ENCODE measurements at regions of chr3 and their contacts with region 1.

Region 1: DNA sequence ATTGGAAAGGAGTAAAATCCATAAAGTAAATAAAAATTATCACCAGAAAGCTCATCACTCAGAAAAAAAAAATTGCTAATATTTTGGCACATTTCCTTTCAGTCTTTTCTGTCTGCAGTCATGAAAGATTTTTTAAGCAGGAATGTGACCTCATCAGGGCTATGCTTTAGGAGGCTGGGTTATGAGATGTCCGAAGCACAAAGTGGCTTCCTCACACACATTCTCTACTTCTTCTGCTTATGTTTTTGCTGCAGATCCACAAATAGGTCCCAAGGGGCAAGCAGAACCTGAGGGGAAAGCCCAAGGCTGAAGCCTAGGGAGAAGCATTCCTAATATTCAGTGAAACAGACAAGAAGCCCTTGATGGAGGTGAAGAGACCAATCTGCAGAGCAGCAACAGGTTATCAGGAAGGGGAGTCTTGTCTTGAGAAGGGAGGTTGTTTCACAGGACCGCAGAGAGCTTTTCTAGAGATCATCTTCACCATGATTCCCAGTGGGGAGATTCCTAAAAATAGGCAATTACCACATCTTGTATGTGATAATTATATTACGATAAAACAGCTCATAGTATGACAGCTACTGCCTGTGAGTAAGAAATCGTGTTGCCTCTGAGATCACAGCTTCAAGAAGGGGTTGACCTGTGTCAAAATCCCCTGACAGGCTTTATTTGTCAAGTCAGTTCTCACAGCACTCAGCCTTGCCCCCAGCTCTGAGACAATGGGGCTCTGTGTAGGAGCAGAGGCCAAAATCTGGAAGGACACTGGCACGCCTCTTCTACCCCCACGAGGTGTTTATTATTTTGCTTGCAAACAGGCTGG is 60.5 kb downstream of the IGF2BP2 start:
- DNase-seq: no peak
- H3K4me3 ChIP-seq: no peak overlapping the region
- H3K27ac ChIP-seq: no peak overlapping the region
- H3K4me1 ChIP-seq: peaks cover 64% of the 10 kb centered on the region
- H3K27me3 ChIP-seq: no peaks in the 10 kb centered on the region
- CTCF ChIP-seq: no peak

Region 2: GRCh38 chr3:185488465-185488864 is 275.9 kb before region 1 on chr3:
- CTCF ChIA-PET with region 1: no interaction called
- POLR2A ChIA-PET with region 1: no interaction called
- intact Hi-C with region 1: no loop called
- DNase-seq: no peak
- H3K4me3 ChIP-seq: no peak overlapping the region
- H3K27ac ChIP-seq: no peak overlapping the region
- H3K4me1 ChIP-seq: no peaks in the 10 kb centered on the region
- H3K27me3 ChIP-seq: no peaks in the 10 kb centered on the region
- CTCF ChIP-seq: no peak

Region 3: DNA sequence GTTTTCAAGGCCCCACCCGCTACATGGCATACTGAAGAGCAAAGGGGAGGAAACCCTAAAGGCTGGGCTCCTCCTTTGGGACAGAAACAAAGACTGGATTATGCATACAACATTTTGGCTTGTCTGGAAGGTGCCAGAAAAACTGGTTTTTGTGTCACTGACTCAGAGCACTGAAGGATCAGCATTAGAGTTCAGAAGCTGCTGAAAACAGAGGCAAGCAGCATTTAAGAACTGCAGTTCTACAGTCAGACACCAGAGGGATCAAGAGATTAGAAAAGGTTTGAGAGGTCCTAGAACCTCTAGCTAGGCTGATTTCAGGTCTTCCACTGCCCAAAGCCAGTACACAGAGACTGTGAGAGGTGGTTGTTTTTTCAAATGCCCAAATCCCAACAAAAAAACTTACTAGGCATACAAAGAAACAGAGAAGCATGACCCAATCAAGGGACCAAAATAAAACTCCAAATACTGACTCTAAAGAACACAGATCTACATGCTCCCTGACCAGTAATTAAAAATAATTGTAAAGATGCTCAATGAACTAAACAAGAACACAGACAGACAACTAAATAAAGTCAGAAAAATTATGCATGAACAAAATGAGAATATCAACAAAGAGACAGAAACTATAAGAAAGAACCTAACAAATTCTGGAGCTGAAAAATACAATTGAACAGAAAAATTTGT is 87.1 kb before region 1 on chr3:
- CTCF ChIA-PET with region 1: interaction called, 21 read pairs
- POLR2A ChIA-PET with region 1: no interaction called
- intact Hi-C with region 1: loop called (anchors 1 kb)
- DNase-seq: peak; percentile 73
- H3K4me3 ChIP-seq: no peak overlapping the region
- H3K27ac ChIP-seq: no peak overlapping the region
- H3K4me1 ChIP-seq: no peaks in the 10 kb centered on the region
- H3K27me3 ChIP-seq: no peaks in the 10 kb centered on the region
- CTCF ChIP-seq: peak; percentile 75

Region 4: DNA sequence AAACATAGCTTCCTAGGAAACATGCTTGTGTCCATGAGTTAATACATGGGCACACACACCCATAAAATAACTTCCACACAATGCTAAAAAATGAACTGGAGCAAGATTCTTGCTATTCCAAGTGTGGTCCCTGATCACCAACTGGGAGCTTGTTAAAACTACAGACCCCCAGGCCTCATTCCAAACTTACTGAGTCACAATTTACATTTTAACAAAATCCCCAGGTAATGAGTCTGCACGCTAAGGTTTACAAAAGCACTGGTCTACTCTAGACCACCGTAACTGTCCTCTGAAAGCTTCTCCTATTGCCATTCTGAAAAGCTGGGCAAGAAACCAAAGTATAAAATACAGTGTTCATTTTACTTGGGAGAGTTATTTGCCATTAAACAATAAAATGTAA is 15.1 kb after region 1 on chr3:
- CTCF ChIA-PET with region 1: interaction called, 5 read pairs
- POLR2A ChIA-PET with region 1: no interaction called
- intact Hi-C with region 1: loop called (anchors 2 kb)
- DNase-seq: no peak
- H3K4me3 ChIP-seq: no peak overlapping the region
- H3K27ac ChIP-seq: no peak overlapping the region
- H3K4me1 ChIP-seq: peaks cover 13% of the 10 kb centered on the region
- H3K27me3 ChIP-seq: no peaks in the 10 kb centered on the region
- CTCF ChIP-seq: no peak

Region 5: GRCh38 chr3:185824476-185825378 is 60.4 kb after region 1 on chr3 and contains the start of gene IGF2BP2:
- CTCF ChIA-PET with region 1: no interaction called
- POLR2A ChIA-PET with region 1: interaction called, 5 read pairs
- intact Hi-C with region 1: loop called (anchors 5 kb)
- DNase-seq: peak; percentile 89
- H3K4me3 ChIP-seq: peak within 1 kb of the TSS; percentile 97
- H3K27ac ChIP-seq: peak within 1 kb of the TSS; percentile 97
- H3K4me1 ChIP-seq: peaks cover 25% of the 10 kb centered on the region
- H3K27me3 ChIP-seq: no peaks in the 10 kb centered on the region
- CTCF ChIP-seq: no peak
- total RNA-seq, gene IGF2BP2: 66.2 and 77.2 TPM in 2 replicates

Measured in A673 (cell line).